ENCODE measurements at regions of chr1 and their contacts with region 1.

Region 1: GRCh38 chr1:89843281-89844121 is 22.7 kb downstream of the LRRC8D start:
- DNase-seq: peak; percentile 74
- H3K4me3 Mint-ChIP-seq: peak overlapping the region; percentile 93
- H3K27ac Mint-ChIP-seq: peak overlapping the region; percentile 94
- H3K4me1 Mint-ChIP-seq: peaks cover 68% of the 10 kb centered on the region
- H3K27me3 Mint-ChIP-seq: no peaks in the 10 kb centered on the region

Region 2: DNA sequence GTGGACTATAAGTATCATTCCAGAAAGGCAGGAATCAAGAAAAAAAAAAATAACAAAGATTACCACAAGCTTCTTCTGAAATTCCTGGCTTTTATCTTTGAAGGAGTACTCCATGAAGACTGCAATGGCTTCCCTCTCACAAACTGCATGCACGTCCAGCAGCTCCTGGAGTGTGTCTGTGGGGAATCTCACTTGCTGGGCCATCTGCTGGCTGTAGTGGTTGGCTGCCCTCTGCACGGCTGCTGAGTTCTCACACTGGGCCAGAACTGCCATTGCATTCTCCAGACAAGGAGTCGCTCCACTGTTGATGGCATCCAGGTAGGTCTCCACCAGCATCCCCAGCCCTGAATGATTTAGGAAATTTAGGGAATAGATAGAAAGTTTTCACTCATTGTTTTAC is 694.3 kb before region 1 on chr1:
- intact Hi-C with region 1: no loop called
- DNase-seq: no peak
- H3K4me3 Mint-ChIP-seq: no peak overlapping the region
- H3K27ac Mint-ChIP-seq: no peak overlapping the region
- H3K4me1 Mint-ChIP-seq: peaks cover 14% of the 10 kb centered on the region
- H3K27me3 Mint-ChIP-seq: peaks cover 6% of the 10 kb centered on the region

Region 3: DNA sequence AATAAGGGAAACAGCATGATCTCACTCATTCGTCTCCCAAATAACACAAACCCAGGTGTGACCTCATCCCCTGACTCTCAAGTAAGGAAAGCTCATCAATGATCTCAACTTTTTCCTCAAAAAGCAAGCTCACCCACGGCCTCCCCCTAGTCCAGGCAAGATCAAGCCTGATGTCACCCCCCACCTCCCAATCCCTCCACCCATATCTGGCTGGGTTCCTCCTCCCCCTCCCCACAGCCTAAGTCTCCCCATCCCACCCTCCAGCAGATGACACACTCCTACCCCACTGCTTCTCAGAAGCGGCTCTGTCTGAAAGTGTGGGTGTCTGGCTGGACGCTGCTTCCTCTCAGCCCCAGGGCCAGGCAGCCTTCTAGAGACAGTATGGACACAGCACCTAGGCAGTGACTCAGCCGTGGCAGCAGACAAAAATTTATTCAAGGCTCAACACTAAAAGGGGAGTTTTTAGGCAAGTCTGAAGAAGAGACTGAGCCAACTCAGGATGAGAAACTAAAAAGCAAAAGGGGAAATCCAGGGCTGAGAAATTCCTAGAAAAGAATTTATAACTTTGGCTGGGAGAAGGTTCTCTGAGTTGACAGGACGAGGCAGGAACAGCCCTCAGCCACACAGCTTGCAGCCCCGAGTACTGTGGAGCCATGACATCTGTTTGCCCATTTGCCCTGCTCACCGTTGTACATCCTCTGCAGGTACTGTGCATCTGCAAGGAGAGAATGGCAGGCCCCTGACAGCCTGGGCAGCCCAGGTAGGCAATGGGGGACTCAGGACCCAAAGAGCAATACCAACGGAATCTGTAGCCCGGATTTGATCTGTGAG is 104.3 kb before region 1 on chr1:
- intact Hi-C with region 1: loop called (anchors 5 kb)
- DNase-seq: no peak
- H3K4me3 Mint-ChIP-seq: peak overlapping the region; percentile 74
- H3K27ac Mint-ChIP-seq: peak overlapping the region; percentile 94
- H3K4me1 Mint-ChIP-seq: peaks cover 40% of the 10 kb centered on the region
- H3K27me3 Mint-ChIP-seq: no peaks in the 10 kb centered on the region

Region 4: DNA sequence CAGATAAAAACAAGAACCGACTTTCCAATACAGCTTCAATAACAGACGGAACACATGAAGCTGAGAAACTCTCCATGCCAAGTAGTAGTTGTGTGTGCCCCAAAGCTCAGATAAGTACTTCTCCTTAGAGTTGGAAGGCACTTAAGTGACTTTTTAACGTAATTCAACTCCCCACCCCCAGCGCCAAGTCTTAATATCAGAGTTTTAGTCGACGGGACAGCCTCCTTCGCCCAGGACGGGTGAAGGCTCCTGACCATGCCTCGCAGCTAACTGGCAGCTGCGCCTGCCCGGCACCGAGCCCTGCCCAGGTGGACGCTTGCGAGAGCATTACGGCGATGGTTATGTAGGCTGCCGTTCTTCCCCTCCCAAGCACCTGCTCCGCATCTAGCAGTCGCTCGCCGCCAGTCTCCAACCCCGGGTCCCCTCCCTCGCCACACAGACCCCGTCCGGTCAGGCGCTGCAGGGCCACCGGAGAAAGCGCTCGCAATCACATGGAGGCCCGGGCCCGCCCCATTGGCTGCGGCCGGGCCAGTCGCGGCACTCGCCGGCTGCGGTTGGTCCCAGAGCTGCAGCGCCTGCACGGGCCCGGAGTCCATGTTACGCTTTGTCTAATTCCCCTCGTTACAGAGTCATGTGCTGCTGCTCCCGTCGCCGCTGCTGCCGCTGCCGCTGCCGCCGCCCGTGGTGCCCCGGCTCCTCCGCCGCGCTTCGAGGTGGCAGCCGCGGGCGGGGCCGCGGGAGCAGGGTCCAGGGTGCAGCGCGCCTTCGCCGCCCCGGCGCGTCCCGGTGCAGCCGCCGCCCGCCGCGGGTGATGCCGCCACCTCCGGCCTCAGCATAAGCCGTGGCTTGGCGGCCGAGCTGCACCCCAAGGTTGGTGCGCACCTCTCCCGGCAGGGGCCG is 22.8 kb before region 1 on chr1 and contains the start of gene LRRC8D:
- intact Hi-C with region 1: loop called (anchors 1 kb)
- DNase-seq: peak; percentile 66
- H3K4me3 Mint-ChIP-seq: peak within 1 kb of the TSS; percentile 84
- H3K27ac Mint-ChIP-seq: peak within 1 kb of the TSS; percentile 66
- H3K4me1 Mint-ChIP-seq: peaks cover 23% of the 10 kb centered on the region
- H3K27me3 Mint-ChIP-seq: peaks cover 13% of the 10 kb centered on the region
- total RNA-seq, gene LRRC8D: 28.6 and 33.3 TPM in 2 replicates

Region 5: GRCh38 chr1:89908672-89909436 is 65.4 kb after region 1 on chr1:
- intact Hi-C with region 1: loop called (anchors 2 kb)
- DNase-seq: no peak
- H3K4me3 Mint-ChIP-seq: no peak overlapping the region
- H3K27ac Mint-ChIP-seq: peak overlapping the region; percentile 34
- H3K4me1 Mint-ChIP-seq: peaks cover 49% of the 10 kb centered on the region
- H3K27me3 Mint-ChIP-seq: no peaks in the 10 kb centered on the region

Region 6: DNA sequence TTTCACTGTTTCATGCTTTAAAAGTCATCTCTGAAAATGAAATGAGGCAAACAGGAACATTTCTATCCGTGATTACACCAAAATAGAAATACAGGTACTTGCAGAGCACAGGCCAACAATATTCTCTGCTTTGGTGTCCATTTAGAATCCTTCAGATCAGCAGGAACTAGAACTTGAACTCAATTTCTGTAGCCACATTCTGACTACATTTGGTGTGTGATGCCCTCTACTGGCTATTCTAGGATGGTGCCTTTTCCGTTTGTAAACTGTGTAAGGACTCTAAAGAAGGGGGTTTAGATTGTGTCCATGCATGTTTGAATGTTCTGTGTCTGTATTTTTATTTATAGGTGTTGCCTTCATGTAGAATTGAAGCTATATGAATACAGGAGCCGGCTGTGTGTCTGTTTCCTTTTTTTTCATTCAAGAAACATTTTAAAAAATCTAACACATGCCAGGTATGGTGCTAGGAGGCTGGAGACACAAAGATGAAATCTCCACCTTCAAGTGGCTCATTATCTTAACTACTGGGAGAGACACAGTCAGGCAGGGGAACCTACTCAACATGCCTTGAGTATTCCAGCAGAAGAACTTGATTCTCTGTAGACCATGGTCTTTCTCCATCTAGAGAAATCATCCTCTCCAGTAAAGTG is 143.8 kb after region 1 on chr1:
- intact Hi-C with region 1: loop called (anchors 2 kb)
- DNase-seq: peak; percentile 38
- H3K4me3 Mint-ChIP-seq: no peak overlapping the region
- H3K27ac Mint-ChIP-seq: no peak overlapping the region
- H3K4me1 Mint-ChIP-seq: peaks cover 9% of the 10 kb centered on the region
- H3K27me3 Mint-ChIP-seq: peaks cover 15% of the 10 kb centered on the region

Measured in activated T-helper 2 cell treated with anti-CD3 and anti-CD28 coated beads, Interferon-gamma antibody, Interleukin-2, Interleukin-4, amounts not matched to agents 10 μg/mL and 5 μg/mL and 100 μg/mL, durations not matched to agents 14 hours and 24 hours and 36 hours (primary cell).